ENCODE measurements at regions of chr20 and their contacts with region 1.

Region 1: DNA sequence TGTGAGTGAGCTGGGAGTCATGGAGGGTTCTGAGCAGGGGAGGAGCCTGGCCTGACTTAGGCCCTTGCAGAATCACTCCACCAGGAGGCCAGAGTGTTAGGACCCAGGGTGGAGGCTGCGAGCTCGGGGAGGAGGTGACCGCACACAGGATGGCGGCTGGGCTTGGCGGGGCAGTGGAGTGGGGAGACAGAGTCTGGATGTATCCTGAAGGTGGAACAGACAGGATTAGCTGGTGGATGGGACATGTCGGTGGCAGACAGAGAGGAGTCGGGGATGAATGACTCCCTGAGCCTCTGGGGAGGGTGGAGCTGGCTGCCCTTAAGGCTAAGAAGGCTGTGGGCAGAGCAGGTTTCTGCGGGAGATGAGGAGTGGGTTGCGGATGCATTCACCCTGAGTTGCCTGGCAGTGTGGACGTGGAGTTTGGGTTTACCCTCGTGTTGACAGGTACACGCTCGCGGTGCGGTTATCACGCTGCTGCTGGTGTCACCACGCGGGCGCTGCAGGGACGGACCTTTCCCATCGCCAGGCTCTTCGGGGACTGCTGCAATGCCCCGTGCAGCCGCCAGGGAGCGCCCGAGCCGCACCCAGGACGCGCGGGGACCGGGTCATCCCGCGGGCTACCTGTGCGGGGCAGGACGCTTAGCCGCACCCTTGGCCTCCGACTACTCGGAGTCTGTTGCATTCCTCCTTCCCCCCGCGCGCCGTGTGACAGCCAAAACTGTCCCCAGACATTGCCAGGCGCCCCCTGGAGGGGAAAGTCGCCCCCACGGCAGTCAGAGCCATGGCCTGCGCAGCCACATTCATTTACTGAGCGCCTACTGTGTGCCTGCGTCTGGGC is 43.0 kb upstream of the PTGIS start:
- DNase-seq: peak; percentile 86 to 92 (median 87)
- ATAC-seq: peak; percentile 92
- H3K4me3 ChIP-seq: no peak overlapping the region
- H3K4me1 ChIP-seq: peaks cover 16% of the 10 kb centered on the region
- CTCF ChIP-seq: peak; percentile 100

Region 2: DNA sequence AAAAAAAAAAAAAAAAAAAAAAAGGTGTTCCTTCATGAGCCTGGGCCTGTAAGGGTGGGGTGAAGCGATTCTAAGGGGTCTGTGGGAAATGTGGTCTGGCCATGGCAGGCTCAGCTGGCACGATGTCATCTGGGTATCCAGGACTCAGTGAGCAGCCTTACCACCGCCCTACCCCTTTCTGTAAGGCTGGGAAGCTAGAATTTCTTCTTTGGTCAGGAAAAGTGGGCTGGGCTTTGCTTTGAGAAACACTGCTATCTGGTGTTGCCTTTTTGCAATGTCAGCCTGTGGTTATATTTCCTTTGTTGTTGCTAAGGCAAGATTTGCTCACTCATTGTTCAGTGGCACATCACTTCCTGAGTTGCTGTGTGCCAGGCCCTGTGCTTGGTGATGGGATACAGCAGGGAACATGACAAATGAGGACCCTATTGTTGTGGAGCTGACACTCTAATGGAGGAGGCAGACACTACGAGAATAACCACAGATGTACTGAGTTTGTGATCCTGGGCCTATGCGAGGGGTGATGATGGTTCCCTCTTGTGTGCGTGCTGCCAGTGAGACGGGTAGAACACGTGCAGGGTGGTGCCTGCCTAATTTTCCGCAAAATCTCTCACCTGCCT is 287.2 kb before region 1 on chr20:
- intact Hi-C with region 1: loop called in 1 of 2 experiments (anchors 10 kb)
- DNase-seq: peak in 1 of 3 donors; percentile 19
- ATAC-seq: peak; percentile 72
- H3K4me3 ChIP-seq: no peak overlapping the region
- H3K4me1 ChIP-seq: no peaks in the 10 kb centered on the region
- CTCF ChIP-seq: no peak

Region 3: GRCh38 chr20:49541733-49542513 is 69.0 kb before region 1 on chr20:
- intact Hi-C with region 1: loop called (anchors 5 kb)
- DNase-seq: peak in 2 of 3 donors; percentile 76
- ATAC-seq: peak; percentile 87
- H3K4me3 ChIP-seq: no peak overlapping the region
- H3K4me1 ChIP-seq: no peaks in the 10 kb centered on the region
- CTCF ChIP-seq: peak; percentile 69

Region 4: DNA sequence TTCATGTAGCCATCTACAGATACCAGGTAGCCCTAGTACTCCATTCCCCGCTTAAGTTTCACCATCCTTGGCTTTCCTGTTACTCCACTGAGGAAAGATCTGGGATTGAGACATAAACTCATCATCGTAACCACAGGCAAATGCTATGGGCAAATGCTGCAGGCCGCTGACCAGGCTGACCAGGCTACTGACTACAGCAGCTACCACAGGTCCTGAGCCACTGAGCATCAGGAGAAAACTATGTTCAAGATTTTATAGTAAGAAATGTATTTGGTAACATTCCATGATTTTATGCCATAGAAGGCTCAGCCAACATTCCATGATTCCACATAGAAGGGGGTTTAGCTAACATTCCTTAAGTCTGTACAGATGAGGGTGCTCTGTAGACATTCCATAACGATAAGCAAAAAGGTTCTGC is 118.8 kb after region 1 on chr20:
- intact Hi-C with region 1: no loop called
- DNase-seq: no peak
- ATAC-seq: no peak
- H3K4me3 ChIP-seq: no peak overlapping the region
- H3K4me1 ChIP-seq: peaks cover 2% of the 10 kb centered on the region
- CTCF ChIP-seq: no peak

Region 5: DNA sequence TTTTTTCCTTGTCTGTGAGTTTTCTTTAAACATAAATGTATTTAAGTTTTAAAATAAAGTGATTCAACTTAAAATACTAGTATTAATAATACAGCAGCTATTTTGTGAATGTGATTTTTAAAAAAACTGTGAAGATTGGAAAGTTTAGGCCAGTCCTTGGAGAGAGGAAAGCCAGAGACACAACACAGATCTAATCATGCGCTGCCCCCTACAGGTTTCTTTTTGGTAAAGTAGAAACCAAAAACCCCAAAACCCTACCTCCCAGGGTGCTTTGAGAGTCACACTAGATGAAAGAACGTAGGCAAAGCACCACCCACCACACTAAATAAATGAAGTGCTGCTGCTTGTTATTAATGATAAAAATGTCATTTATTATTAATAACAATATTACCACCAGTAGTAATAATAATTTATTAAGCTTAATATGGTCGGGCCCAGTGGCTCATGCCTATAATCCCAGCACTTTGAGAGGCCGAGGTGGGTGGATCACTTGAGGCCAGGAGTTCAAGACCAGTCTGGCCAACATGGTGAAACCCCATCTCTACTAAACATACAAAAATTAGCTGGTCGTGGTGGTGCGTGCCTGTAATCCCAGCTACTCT is 235.4 kb after region 1 on chr20:
- intact Hi-C with region 1: loop called (anchors 5 to 10 kb)
- DNase-seq: peak in 1 of 3 donors; percentile 84
- ATAC-seq: peak; percentile 80
- H3K4me3 ChIP-seq: no peak overlapping the region
- H3K4me1 ChIP-seq: no peaks in the 10 kb centered on the region
- CTCF ChIP-seq: peak; percentile 26